Activated B cell treated with CpG ODN at 0.5 μM for 24 hours (primary cell): ENCODE measurements at regions of chr11 and their contacts with region 1.

Region 1: DNA sequence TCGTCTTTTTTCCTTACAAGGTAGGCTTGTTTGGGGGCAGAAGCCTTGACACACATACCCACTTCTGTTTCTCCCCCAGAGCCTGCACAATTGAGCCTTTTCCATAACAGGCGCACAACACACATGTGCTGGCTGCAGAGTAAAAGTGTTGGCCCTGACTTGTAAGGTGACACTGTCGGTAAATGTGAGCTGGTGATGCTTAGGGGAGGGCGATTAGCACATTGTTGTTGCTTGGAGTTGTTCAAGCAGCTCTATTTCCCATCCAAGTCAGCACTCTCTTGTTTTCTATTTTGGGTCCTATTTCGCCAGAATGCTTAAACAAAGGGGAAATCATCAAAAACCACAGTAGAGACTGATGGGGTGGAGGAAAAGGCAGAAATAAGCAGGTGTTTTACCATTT is 51.9 kb upstream of the PTPRJ start:
- DNase-seq: no peak
- ATAC-seq: peak; percentile 37
- H3K4me3 Mint-ChIP-seq: peak overlapping the region; percentile 12
- H3K27ac Mint-ChIP-seq: peak overlapping the region; percentile 30
- H3K4me1 Mint-ChIP-seq: peaks cover 52% of the 10 kb centered on the region
- H3K27me3 Mint-ChIP-seq: no peaks in the 10 kb centered on the region
- CTCF ChIP-seq: no peak

Region 2: GRCh38 chr11:47886096-47886495 is 42.3 kb before region 1 on chr11:
- CTCF ChIA-PET with region 1: no interaction called
- POLR2A ChIA-PET with region 1: no interaction called
- intact Hi-C with region 1: no loop called
- DNase-seq: no peak
- ATAC-seq: no peak
- H3K4me3 Mint-ChIP-seq: no peak overlapping the region
- H3K27ac Mint-ChIP-seq: peak overlapping the region; percentile 37
- H3K4me1 Mint-ChIP-seq: peaks cover 27% of the 10 kb centered on the region
- H3K27me3 Mint-ChIP-seq: no peaks in the 10 kb centered on the region
- CTCF ChIP-seq: no peak

Region 3: DNA sequence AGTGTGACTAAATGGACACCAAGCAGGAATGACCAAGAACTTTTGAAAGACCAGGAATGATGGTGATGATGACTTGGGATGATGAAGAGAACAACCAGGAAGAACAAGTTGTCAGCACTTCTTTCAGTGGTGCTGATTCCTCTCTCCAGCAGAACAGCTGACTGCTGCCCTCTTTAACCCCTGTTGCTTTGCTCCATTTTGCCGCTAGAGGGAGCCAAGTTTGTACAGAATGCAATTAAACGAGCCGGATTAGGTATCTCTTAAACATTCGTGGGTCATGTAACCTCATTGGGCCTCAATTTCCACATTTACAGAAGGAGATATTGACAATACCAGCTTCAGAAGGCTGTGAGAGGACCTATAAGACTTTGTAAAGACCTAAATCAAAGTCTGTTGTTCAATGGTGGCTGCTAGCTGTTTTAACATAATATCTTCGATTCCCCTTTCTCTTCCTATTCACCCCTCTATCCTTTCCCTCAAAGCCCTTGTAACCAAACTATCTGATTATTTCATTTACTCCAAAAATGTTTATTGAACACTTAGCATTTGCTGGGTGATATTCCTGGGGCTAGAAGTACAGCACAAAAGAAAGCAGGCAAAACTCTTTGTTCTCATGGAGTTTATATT is 379.4 kb after region 1 on chr11:
- CTCF ChIA-PET with region 1: no interaction called
- POLR2A ChIA-PET with region 1: no interaction called
- intact Hi-C with region 1: loop called (anchors 10 kb)
- DNase-seq: no peak
- ATAC-seq: peak; percentile 28
- H3K4me3 Mint-ChIP-seq: no peak overlapping the region
- H3K27ac Mint-ChIP-seq: no peak overlapping the region
- H3K4me1 Mint-ChIP-seq: peaks cover 2% of the 10 kb centered on the region
- H3K27me3 Mint-ChIP-seq: peaks cover 12% of the 10 kb centered on the region
- CTCF ChIP-seq: peak; percentile 71